ENCODE measurements at regions of chr7 and their contacts with region 1.

Region 1: DNA sequence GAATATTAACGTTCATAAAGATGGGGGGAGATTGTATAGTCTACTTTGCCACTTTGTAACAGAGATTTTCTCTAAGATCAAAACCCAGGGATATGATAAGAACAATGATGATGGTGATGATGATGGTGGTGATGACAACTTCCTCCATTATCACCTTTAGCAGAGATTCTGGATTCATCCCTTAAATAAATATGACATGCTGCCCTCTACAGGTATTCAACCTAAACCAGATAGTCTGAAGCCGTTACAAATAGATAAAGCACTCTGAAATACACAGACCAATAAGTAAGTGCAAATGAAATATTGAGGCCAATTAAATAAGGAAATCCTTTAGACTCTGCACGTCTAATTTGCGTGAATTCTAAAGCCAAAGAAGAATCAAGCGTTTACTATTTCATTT is 211.5 kb downstream of the CREB5 start:
- DNase-seq: no peak
- ATAC-seq: peak; percentile 32

Region 2: GRCh38 chr7:28685644-28686417 is 62.0 kb after region 1 on chr7:
- intact Hi-C with region 1: loop called (anchors 5 kb)
- DNase-seq: peak; percentile 90
- ATAC-seq: peak; percentile 92

Measured in Right ventricle myocardium superior (tissue), 1 donor.